Astrocyte of the cerebellum (primary cell): ENCODE measurements at regions of chr5 and their contacts with region 1.

Region 1: GRCh38 chr5:129244478-129244877 is 149.9 kb downstream of the ISOC1 start:
- DNase-seq: no peak
- H3K4me3 ChIP-seq: no peak overlapping the region
- CTCF ChIP-seq: no peak

Region 2: DNA sequence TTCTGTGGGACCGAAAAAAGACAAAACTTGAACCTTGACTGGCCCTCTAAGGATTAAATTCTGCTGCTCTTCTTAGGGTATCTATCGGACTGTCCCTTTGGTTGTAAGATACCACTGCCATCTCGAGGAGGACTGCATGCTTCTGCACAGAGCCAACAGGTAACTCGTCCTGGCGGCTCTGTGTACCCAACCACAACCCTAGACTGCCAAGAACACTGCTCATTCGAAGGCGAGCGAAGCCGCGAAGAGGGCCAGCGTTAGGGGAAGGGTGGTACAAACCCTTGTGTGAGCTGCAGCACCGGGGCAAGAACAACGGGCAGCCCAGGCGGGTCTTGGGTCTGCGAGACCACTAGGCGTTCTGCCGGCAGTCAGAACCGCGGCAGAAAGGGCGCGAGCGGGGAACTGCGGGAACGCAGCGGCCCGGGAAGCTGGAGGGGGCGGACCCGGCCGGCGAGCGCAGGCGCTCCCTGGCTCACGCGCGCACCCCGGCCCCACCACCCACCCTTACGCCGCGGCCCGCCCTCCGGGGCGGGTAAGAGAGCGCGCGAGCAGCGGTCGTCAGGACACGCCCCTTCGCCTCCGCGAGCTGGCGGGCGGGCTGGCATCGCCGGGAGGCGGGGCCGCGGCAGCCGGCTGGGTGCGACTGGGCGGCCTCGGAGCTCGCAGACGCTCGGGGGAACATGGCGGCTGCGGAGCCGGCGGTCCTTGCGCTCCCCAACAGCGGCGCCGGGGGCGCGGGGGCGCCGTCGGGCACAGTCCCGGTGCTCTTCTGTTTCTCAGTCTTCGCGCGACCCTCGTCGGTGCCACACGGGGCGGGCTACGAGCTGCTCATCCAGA is 150.2 kb before region 1 on chr5 and contains the start of gene ISOC1:
- in situ Hi-C with region 1: no loop called
- DNase-seq: peak; percentile 59
- H3K4me3 ChIP-seq: peak within 1 kb of the TSS; percentile 80
- CTCF ChIP-seq: no peak

Region 3: GRCh38 chr5:129169573-129169972 is 74.9 kb before region 1 on chr5:
- in situ Hi-C with region 1: loop called (anchors 5 kb)
- DNase-seq: no peak
- H3K4me3 ChIP-seq: no peak overlapping the region
- CTCF ChIP-seq: no peak

Region 4: GRCh38 chr5:129191633-129192032 is 52.8 kb before region 1 on chr5:
- in situ Hi-C with region 1: no loop called
- DNase-seq: no peak
- H3K4me3 ChIP-seq: no peak overlapping the region
- CTCF ChIP-seq: no peak